Heart right ventricle (tissue), 16 donors: ENCODE measurements at regions of chr10 and their contacts with region 1.

Region 1: DNA sequence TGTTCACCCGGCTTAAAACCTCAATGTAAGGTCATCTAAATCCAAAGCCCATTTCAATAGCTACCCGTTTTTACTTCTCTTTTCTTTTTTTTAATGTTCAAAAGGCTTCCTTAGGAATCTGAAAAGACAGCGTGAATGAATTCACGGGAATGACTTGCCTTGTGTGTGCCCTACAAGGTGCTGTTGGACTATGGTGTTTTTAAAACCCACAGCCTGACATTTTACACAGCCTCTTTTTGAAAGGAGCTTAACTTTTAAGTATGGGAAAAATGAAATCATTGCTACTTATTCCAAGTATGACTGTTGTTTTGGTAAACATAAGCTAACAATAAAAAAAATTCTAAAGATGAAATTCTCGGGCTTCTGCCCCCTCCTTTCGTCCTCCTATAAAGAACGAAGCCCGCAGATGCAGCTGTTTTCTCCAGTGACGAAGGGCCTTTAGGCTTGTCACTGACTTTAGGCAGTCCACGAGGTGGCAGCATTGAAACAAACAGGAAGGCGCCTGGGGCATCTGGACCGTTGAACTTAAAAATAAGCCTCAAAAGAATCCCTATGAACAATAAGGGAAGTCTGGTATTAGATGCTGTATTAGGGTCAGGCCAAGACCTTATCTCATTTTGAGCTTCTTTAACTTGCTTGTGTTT is 141.3 kb downstream of the NRP1 start:
- DNase-seq: peak; percentile 70 to 90
- ATAC-seq: peak; percentile 74 to 85 (median 82)
- H3K4me3 ChIP-seq: no peak overlapping the region
- H3K27ac ChIP-seq: peak overlapping the region in 8 of 10 donors; percentile 29 to 83 (median 62)
- H3K4me1 ChIP-seq: peaks cover 13 to 63% (median 54%) of the 10 kb centered on the region in 9 donors
- H3K27me3 ChIP-seq: no peaks in the 10 kb centered on the region
- CTCF ChIP-seq: peak; percentile 52 to 92 (median 82)

Region 2: DNA sequence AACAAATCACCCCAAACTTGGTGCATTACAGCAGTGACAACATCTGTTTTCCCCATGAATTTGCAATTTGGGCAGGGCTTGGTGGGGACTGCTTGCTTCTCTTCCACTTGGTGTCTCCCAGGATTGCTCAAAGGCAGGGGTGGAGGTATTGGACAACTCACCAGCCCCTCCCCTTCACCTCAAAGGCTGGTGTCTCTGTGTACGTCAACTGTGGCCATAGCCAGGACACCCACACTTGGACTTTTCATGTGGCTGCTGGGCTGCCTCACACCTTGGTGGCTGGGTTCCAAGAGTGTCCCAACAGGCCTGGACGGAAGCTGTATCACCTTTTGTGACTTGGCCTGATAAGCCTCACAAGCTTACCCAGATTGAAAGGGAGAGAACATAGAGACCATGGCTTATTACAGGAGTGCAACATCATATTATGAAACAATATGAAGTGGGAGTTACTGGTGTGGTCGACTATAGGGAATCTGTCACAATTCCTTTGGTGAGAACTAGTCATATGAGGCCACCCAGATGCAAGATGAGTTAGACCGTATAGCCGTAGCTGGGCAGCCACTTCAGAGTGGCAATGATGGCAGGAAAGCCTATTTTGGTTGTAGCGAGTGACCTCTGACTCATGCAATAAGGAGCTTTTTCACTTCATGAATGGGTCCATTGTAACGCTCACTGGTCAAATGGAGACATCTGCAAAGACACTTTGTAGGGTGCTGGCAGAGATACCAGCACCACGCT is 47.6 kb before region 1 on chr10:
- intact Hi-C with region 1: no loop called
- DNase-seq: no peak
- ATAC-seq: peak in 2 of 8 donors; percentile 11 to 72
- H3K4me3 ChIP-seq: no peak overlapping the region
- H3K27ac ChIP-seq: peak overlapping the region in 4 of 10 donors; percentile 7 to 49 (median 35)
- H3K4me1 ChIP-seq: peaks cover 0 to 34% (median 12%) of the 10 kb centered on the region in 9 donors
- H3K27me3 ChIP-seq: peaks cover 0 to 3% (median 0%) of the 10 kb centered on the region in 7 donors
- CTCF ChIP-seq: no peak

Region 3: GRCh38 chr10:33234831-33235237 is 41.7 kb after region 1 on chr10:
- intact Hi-C with region 1: loop called in 1 of 10 experiments (anchors 5 kb)
- DNase-seq: peak in 1 of 2 donors; percentile 28
- ATAC-seq: peak; percentile 34 to 75 (median 56)
- H3K4me3 ChIP-seq: no peak overlapping the region
- H3K27ac ChIP-seq: peak overlapping the region in 9 of 10 donors; percentile 41 to 82 (median 72)
- H3K4me1 ChIP-seq: peaks cover 35 to 87% (median 72%) of the 10 kb centered on the region in 9 donors
- H3K27me3 ChIP-seq: no peaks in the 10 kb centered on the region
- CTCF ChIP-seq: no peak

Region 4: DNA sequence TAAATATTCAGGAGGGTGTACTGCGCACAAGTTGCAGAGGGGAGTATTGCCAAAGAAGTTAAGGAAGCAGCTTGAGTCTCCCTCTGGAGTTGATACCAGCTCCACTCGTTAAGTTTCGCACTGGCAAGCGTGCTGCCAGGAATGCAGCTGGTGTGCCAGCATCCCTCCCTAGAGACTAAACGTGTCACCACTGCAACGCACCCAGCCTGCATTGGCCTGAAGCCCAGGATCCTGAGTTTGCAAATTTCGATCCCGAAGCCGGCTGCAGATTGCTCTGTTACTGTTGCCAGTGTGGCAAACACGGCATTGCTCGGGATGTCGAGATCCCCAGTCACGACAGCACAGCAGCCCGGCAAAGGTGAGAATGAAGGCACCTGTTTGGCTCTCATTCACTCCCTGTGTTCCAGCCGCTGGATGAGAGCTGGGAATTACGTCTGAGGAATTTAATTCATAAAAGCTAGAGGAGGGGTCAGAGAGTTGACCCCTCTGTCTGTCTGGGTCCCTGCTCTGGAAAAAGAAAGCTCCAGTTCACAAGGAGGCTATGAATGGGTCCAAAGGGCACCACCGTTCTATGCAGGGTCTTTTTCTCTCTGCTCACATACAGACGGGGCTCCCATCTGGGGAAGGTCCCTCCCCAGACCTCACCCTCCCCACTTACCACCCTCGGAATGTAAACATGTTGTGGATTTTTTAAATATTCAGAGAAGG is 80.3 kb after region 1 on chr10:
- intact Hi-C with region 1: loop called in 1 of 10 experiments (anchors 10 kb)
- DNase-seq: peak; percentile 86 to 87
- ATAC-seq: peak; percentile 70 to 95 (median 90)
- H3K4me3 ChIP-seq: peak overlapping the region in 8 of 10 donors; percentile 4 to 39 (median 30)
- H3K27ac ChIP-seq: peak overlapping the region; percentile 66 to 99 (median 86)
- H3K4me1 ChIP-seq: peaks cover 20 to 99% (median 77%) of the 10 kb centered on the region in 9 donors
- H3K27me3 ChIP-seq: no peaks in the 10 kb centered on the region
- CTCF ChIP-seq: peak in 4 of 9 donors; percentile 7 to 37 (median 33)

Region 5: GRCh38 chr10:33314811-33315561 is 121.8 kb after region 1 on chr10:
- intact Hi-C with region 1: loop called in 1 of 10 experiments (anchors 10 kb)
- DNase-seq: no peak
- ATAC-seq: no peak
- H3K4me3 ChIP-seq: no peak overlapping the region
- H3K27ac ChIP-seq: peak overlapping the region in 6 of 10 donors; percentile 35 to 99 (median 52)
- H3K4me1 ChIP-seq: peaks cover 37 to 100% (median 90%) of the 10 kb centered on the region in 9 donors
- H3K27me3 ChIP-seq: no peaks in the 10 kb centered on the region
- CTCF ChIP-seq: no peak